Caco-2 (cell line): ENCODE measurements at regions of chr3 and their contacts with region 1.

Region 1: DNA sequence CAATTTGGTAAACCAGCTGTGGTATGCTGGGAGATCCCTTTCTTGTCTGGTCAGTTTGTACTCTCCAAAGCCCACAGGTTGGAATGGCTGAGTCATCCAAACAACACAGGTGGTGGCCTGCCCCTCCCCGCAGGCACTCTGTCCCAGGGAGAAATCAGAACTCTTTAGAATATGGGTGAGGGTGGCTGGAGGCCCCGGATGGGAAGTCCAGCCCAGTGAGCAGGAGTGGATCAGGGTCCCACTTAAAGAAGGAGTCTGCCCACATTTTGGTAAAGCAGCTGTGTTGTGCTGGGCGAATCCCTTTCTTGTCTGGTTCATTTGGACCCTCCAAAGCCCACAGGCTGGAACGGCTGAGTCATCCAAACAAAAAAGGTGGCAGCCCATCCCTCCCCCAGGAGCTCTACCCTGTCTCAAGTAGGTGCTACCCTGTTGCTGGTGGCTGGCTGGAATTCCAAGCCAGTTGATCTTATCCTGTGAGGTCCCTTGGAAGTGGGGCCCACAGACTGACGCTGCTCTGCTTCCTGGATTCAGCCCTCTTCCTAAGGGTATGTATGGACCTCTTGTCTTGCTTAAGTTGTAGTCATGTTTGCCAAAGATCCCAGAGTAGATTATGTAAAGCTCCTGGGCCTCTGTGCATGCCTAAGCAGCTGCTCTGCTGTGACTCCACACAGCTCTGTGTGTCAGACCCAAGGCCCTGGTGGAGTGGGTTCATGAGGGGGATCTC is 44.6 kb downstream of the CCR1 start:
- DNase-seq: peak; percentile 88 to 93
- H3K4me3 ChIP-seq: peak overlapping the region; percentile 3
- H3K4me3 Mint-ChIP-seq: peak overlapping the region; percentile 72
- H3K27ac Mint-ChIP-seq: peak overlapping the region; percentile 99
- H3K4me1 ChIP-seq: peaks cover 51% of the 10 kb centered on the region
- H3K4me1 Mint-ChIP-seq: peaks cover 55% of the 10 kb centered on the region
- H3K27me3 ChIP-seq: no peaks in the 10 kb centered on the region
- H3K27me3 Mint-ChIP-seq: no peaks in the 10 kb centered on the region
- CTCF ChIP-seq: no peak

Region 2: GRCh38 chr3:46087871-46088270 is 75.6 kb before region 1 on chr3:
- CTCF ChIA-PET with region 1: interaction called, 3 read pairs
- POLR2A ChIA-PET with region 1: interaction called, 3 read pairs
- intact Hi-C with region 1: loop called (anchors 1 kb)
- DNase-seq: peak; percentile 42 to 45
- H3K4me3 ChIP-seq: no peak overlapping the region
- H3K4me3 Mint-ChIP-seq: no peak overlapping the region
- H3K27ac Mint-ChIP-seq: no peak overlapping the region
- H3K4me1 ChIP-seq: peaks cover 9% of the 10 kb centered on the region; the same call in 1 of the 2 replicates
- H3K4me1 Mint-ChIP-seq: peaks cover 13% of the 10 kb centered on the region
- H3K27me3 ChIP-seq: no peaks in the 10 kb centered on the region
- H3K27me3 Mint-ChIP-seq: no peaks in the 10 kb centered on the region
- CTCF ChIP-seq: peak; percentile 15 to 25

Region 3: DNA sequence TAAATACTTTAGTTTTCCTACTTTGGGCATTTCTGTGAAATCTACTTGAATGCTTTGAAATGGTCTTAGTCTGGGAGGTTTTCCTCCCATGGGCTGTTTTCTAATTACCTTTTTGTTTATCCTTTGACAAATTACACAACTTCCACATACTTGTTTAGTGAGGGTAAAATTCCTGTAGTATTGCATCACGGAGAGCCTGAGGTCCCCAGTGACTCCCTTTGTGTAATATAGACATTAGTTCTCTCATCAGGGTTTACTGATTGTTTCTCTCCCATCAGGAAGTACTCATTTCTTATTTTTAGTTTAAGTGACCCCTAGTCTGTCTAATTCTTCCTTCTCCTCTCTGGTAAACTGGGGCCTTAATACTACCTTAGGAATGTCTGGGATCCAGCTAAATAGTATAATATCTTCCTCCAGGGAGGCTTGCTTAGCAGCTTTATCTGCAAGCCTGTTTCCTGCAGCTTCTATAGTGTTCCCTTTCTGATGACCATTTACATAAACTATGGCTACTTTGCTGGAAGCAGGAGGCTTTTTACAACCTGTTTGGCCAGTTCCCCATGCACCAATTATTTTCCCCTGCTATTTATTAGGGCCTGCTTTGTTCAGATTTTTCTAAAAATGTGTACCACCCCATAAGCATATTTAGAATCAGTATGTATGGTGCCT is 49.0 kb before region 1 on chr3:
- CTCF ChIA-PET with region 1: no interaction called
- POLR2A ChIA-PET with region 1: interaction called, 3 read pairs
- intact Hi-C with region 1: loop called (anchors 1 kb)
- DNase-seq: peak; percentile 51 to 61
- H3K4me3 ChIP-seq: no peak overlapping the region
- H3K4me3 Mint-ChIP-seq: peak overlapping the region; percentile 23
- H3K27ac Mint-ChIP-seq: peak overlapping the region; percentile 93
- H3K4me1 ChIP-seq: peaks cover 38% of the 10 kb centered on the region
- H3K4me1 Mint-ChIP-seq: peaks cover 21% of the 10 kb centered on the region
- H3K27me3 ChIP-seq: no peaks in the 10 kb centered on the region
- H3K27me3 Mint-ChIP-seq: no peaks in the 10 kb centered on the region
- CTCF ChIP-seq: no peak

Region 4: DNA sequence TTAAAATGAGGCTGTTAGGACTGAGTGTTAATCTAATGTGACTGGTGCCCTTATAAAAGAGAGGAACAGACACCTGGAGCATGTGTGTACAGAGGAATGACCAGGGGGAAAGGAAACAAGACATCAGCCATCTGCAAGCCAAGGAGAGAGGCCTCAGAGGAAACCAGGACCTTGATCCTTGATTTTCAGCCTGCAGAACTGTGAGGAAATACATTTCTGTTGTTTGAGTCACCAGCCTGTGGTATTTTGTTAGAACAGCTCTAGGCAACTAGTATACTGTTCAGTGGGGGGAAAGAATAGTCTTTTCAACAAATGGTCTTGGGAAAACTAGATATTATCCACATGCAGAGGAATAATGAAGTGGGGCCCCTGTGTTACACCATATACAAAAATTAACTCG is 36.0 kb before region 1 on chr3:
- CTCF ChIA-PET with region 1: interaction called, 3 read pairs
- POLR2A ChIA-PET with region 1: no interaction called
- intact Hi-C with region 1: loop called (anchors 2 kb)
- DNase-seq: peak in 1 of 2 experiments; percentile 44
- H3K4me3 ChIP-seq: no peak overlapping the region
- H3K4me3 Mint-ChIP-seq: no peak overlapping the region
- H3K27ac Mint-ChIP-seq: peak overlapping the region; percentile 88
- H3K4me1 ChIP-seq: peaks cover 27% of the 10 kb centered on the region
- H3K4me1 Mint-ChIP-seq: peaks cover 12% of the 10 kb centered on the region
- H3K27me3 ChIP-seq: no peaks in the 10 kb centered on the region
- H3K27me3 Mint-ChIP-seq: no peaks in the 10 kb centered on the region
- CTCF ChIP-seq: no peak

Region 5: DNA sequence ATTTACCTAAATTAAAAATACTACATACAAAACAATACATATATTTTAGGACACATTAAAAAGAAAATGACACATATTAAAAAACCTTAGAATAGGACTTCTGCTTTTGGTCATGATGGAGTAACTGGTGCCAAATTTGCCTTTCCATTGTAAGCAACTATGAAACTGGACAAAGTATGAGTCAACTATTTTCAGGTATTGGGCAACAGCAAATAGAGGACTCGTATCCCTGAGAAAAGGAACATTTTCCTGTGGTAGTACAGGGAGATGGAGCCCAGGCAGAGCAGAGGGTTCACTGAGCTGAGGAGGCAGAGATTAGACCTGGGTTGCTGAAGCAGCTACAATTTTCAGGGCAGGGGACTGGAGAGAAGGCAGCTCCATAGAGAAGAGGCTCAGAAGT is 30.0 kb after region 1 on chr3:
- CTCF ChIA-PET with region 1: no interaction called
- POLR2A ChIA-PET with region 1: no interaction called
- intact Hi-C with region 1: no loop called
- DNase-seq: no peak
- H3K4me3 ChIP-seq: no peak overlapping the region
- H3K4me3 Mint-ChIP-seq: no peak overlapping the region
- H3K27ac Mint-ChIP-seq: no peak overlapping the region
- H3K4me1 ChIP-seq: no peaks in the 10 kb centered on the region
- H3K4me1 Mint-ChIP-seq: no peaks in the 10 kb centered on the region
- H3K27me3 ChIP-seq: no peaks in the 10 kb centered on the region
- H3K27me3 Mint-ChIP-seq: no peaks in the 10 kb centered on the region
- CTCF ChIP-seq: no peak

Region 6: DNA sequence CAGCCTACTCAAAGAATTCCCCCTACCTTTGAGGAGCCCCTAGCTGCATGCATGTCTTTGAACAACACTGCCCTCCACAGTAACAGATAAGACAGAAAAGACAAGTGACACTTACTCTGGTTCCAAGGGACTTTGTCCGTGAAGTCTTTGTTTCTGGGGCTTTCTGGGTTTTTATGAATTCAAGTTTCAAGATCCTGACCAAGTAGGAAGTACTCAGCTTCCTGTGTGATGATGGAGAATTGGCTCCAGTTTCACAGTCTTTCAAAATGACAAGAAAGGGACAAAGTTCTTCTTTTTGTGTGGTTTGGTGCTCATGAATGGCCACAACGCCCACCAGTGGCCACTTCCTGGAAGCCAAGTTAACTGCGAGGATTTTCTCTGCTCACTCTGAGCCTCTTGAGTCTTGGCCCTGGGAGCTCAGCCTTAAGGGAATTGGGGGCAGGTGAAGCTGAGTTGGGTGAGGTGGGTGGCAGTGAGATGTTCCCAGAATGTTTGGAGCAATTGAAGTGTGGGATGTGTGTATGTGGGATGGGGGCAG is 44.8 kb after region 1 on chr3 and contains the start of gene CCR1:
- CTCF ChIA-PET with region 1: interaction called, 17 read pairs
- POLR2A ChIA-PET with region 1: interaction called, 8 read pairs
- intact Hi-C with region 1: loop called (anchors 1 kb)
- DNase-seq: peak; percentile 49 to 61
- H3K4me3 ChIP-seq: no peak within 1 kb of the TSS
- H3K4me3 Mint-ChIP-seq: peak within 1 kb of the TSS; percentile 27
- H3K27ac Mint-ChIP-seq: peak within 1 kb of the TSS; percentile 66
- H3K4me1 ChIP-seq: peaks cover 18% of the 10 kb centered on the region
- H3K4me1 Mint-ChIP-seq: peaks cover 9% of the 10 kb centered on the region
- H3K27me3 ChIP-seq: no peaks in the 10 kb centered on the region
- H3K27me3 Mint-ChIP-seq: no peaks in the 10 kb centered on the region
- CTCF ChIP-seq: peak; percentile 52 to 70
- total RNA-seq, gene CCR1: 1.7 and 2.9 TPM in 2 replicates